ENCODE measurements at regions of chr12 and their contacts with region 1.

Region 1: GRCh38 chr12:48542300-48542928 is 17.0 kb downstream of the OR8S1 start:
- DNase-seq: peak; percentile 36
- H3K27ac ChIP-seq: no peak overlapping the region
- CTCF ChIP-seq: peak; percentile 50

Region 2: GRCh38 chr12:48618541-48618940 is 76.1 kb after region 1 on chr12:
- CTCF ChIA-PET with region 1: interaction called, 79 read pairs
- POLR2A ChIA-PET with region 1: no interaction called
- DNase-seq: peak; percentile 70
- H3K27ac ChIP-seq: no peak overlapping the region
- CTCF ChIP-seq: peak; percentile 97

Measured in RWPE1 (cell line).